Gastrocnemius medialis (tissue), 4 donors: ENCODE measurements at regions of chr12 and their contacts with region 1.

Region 1: DNA sequence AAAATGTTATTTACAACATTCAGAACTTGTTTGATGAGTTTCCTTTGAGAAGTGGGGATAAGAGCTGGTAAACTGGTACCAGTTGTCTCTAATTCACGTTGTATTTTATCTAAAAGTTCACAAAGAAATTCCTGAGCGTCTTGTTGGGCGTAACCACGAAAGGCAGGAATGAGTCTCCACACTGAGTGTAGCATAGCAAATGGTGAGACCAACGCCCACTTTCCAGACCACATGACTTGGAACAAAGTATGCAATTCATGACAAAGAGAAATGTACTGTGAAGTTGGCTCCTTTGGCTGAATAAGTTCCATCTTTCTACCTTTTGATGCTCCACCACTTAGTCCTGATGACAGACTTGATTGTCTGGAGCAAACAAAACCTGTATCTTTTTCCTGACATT is 18.4 kb downstream of the USP44 start:
- DNase-seq: no peak
- ATAC-seq: no peak
- H3K4me3 ChIP-seq: no peak overlapping the region
- H3K27ac ChIP-seq: no peak overlapping the region
- H3K4me1 ChIP-seq: no peaks in the 10 kb centered on the region
- H3K27me3 ChIP-seq: no peaks in the 10 kb centered on the region
- CTCF ChIP-seq: no peak
- POLR2A ChIP-seq: no peak

Region 2: DNA sequence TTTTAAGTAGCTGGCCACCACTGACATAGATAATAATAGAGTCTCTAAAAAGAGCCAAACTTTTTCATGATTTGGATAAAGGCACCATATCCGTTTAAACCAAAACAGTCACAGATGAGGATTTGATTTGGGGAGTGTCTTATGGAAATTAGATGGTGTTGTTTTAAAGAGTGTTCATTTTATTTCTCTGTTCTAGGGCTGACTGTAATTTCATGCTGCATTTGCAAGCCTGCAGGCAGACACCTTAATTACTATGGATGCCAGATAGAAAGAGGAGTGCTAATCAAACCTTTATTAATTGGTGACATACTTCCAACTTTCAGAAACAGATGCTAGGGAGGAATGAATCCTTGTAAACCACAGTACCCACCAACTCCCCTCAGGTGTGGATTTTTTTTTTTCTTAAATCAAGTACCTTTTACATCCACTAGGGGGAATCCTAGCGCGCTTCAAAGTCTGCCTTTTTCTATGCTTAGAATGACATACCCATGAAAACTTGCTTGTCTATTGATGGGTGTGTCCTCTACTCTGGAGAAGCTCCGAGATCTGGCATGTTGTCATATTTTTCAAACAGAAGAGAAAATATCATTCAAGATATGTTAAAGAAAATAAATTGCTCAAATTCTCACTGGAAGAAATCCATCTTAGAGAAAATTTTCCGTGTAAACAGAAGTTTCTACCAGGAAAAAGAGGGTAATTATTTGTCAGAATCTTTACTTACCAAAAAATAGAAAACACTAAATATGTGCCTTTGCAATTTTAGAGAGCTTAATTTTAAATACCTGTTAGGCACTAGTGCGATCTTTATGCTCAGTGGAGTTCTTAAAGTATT is 1398.7 kb before region 1 on chr12:
- in situ Hi-C with region 1: no loop called
- intact Hi-C with region 1: loop called (anchors 5 kb)
- DNase-seq: no peak
- ATAC-seq: peak; percentile 82 to 83
- H3K4me3 ChIP-seq: no peak overlapping the region
- H3K27ac ChIP-seq: no peak overlapping the region
- H3K4me1 ChIP-seq: no peaks in the 10 kb centered on the region
- H3K27me3 ChIP-seq: peaks cover 0 to 3% (median 0%) of the 10 kb centered on the region in 3 donors
- CTCF ChIP-seq: peak; percentile 46 to 81 (median 57)
- POLR2A ChIP-seq: no peak

Region 3: GRCh38 chr12:95117178-95117599 is 415.7 kb before region 1 on chr12:
- in situ Hi-C with region 1: loop called (anchors 10 kb)
- intact Hi-C with region 1: loop called (anchors 1 kb)
- DNase-seq: peak; percentile 32 to 53
- ATAC-seq: peak; percentile 87 to 92
- H3K4me3 ChIP-seq: no peak overlapping the region
- H3K27ac ChIP-seq: peak overlapping the region in 2 of 4 donors; percentile 22 to 59
- H3K4me1 ChIP-seq: peaks cover 16 to 23% of the 10 kb centered on the region in 2 donors
- H3K27me3 ChIP-seq: no peaks in the 10 kb centered on the region
- CTCF ChIP-seq: peak; percentile 52 to 80 (median 72)
- POLR2A ChIP-seq: no peak

Region 4: GRCh38 chr12:95124106-95124505 is 408.7 kb before region 1 on chr12:
- in situ Hi-C with region 1: loop called (anchors 10 kb)
- intact Hi-C with region 1: no loop called
- DNase-seq: no peak
- ATAC-seq: no peak
- H3K4me3 ChIP-seq: no peak overlapping the region
- H3K27ac ChIP-seq: no peak overlapping the region
- H3K4me1 ChIP-seq: peaks cover 0 to 11% of the 10 kb centered on the region in 2 donors
- H3K27me3 ChIP-seq: no peaks in the 10 kb centered on the region
- CTCF ChIP-seq: no peak
- POLR2A ChIP-seq: no peak

Region 5: DNA sequence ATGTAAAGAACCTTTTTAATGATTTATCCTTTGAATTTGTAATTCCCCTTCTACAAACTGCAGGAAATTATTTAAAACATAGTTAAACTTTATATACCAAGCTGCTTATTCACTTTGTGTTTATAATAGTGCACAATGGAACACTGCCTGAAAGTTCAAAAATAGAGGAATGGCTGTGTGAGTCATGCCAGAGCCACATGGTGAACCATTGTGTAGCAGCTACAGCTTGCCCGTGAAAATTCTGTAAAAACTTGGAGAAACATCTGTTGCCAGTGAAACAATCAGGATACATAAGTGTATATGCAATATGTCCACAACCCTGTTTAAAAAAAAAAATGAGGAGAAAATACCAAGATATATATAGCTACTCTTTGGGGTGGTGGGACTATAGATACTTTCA is 255.7 kb before region 1 on chr12:
- in situ Hi-C with region 1: no loop called
- intact Hi-C with region 1: no loop called
- DNase-seq: no peak
- ATAC-seq: no peak
- H3K4me3 ChIP-seq: no peak overlapping the region
- H3K27ac ChIP-seq: peak overlapping the region in 2 of 4 donors; percentile 6 to 19
- H3K4me1 ChIP-seq: no peaks in the 10 kb centered on the region
- H3K27me3 ChIP-seq: no peaks in the 10 kb centered on the region
- CTCF ChIP-seq: no peak
- POLR2A ChIP-seq: no peak

Region 6: GRCh38 chr12:95336390-95337067 is 196.3 kb before region 1 on chr12:
- in situ Hi-C with region 1: no loop called
- intact Hi-C with region 1: loop called (anchors 5 kb)
- DNase-seq: peak; percentile 55 to 75
- ATAC-seq: peak; percentile 95 to 97
- H3K4me3 ChIP-seq: peak overlapping the region in 1 of 4 donors; percentile 9
- H3K27ac ChIP-seq: peak overlapping the region; percentile 2 to 42 (median 38)
- H3K4me1 ChIP-seq: peaks cover 0 to 18% of the 10 kb centered on the region in 2 donors
- H3K27me3 ChIP-seq: no peaks in the 10 kb centered on the region
- CTCF ChIP-seq: peak; percentile 69 to 95 (median 92)
- POLR2A ChIP-seq: no peak

Region 7: GRCh38 chr12:95574799-95575452 is 42.1 kb after region 1 on chr12:
- in situ Hi-C with region 1: no loop called
- intact Hi-C with region 1: no loop called
- DNase-seq: no peak
- ATAC-seq: no peak
- H3K4me3 ChIP-seq: no peak overlapping the region
- H3K27ac ChIP-seq: no peak overlapping the region
- H3K4me1 ChIP-seq: no peaks in the 10 kb centered on the region
- H3K27me3 ChIP-seq: no peaks in the 10 kb centered on the region
- CTCF ChIP-seq: peak in 3 of 5 experiments; percentile 4 to 56 (median 41)
- POLR2A ChIP-seq: no peak